GM13976 (cell line): ENCODE measurements at regions of chr6 and their contacts with region 1.

Region 1: DNA sequence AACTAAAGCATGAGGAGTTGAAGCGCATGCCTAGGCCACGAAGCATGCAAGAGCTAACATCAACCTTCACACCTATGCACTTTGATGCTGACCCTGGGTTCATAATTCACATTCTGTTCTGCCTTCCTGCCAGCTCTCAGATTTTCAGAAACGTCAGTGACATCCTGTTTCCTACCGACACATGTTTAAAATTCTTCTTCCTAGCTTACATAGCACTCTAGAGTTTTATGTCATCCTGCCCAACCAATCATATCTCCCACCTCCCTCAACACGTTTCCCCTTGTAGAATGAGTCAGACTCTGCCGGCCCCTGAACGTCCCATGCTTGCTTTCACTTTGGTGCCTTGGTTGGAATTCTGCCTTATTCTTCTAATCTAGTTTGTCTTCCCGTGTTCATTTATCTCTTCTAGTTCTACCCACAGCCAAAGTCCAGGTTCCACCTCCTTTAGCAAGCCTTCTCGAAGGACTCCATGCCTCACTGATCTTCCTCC is 97.2 kb upstream of the MAP7 start:
- DNase-seq: peak; percentile 42
- CTCF ChIP-seq: no peak

Region 2: DNA sequence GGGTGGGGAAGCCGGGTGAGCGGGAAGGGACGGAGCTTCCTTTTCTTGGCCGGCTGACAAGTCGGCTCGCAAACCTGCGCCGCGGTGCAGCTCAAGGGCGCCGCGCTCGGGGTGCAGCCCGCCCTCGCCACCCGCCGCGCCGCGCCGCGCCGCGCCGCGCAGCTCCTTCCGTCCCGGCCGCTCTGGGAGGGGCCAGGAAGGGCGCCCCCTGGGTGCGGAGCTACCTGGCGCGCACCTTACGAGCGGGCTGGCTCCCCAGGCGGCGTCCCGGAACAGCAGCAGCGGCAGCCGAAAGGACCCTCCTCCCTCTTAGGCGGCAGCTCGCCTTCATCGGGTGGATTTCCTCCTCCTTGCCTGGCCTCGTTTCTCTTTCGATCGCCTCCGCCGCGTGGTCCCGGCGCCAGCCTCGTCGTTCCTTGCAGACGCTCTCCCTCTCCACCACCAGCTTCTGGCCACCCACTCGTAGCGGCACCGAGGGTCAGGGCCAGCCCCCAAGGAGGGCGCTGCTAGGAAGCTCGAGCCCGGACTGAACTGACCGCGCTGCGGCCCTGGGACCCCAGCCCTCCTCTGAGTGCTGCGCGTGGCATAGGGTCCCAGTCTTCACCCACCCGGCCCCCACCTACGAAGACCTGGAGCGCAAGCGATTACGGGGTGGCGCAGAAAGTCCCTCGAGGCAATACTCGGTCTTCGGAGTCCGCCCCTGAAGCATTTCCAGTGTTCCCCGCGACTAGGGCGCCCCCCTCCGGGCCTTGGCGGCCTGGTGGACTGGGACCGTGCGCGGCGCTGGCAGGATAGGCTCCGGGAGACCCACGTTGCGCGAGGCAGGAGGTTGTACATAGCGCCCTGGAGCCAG is 145.2 kb after region 1 on chr6 and contains the start of gene MAP3K5:
- in situ Hi-C with region 1: loop called (anchors 5 kb)
- DNase-seq: peak; percentile 82
- CTCF ChIP-seq: peak; percentile 89